BJ (cell line): ENCODE measurements at regions of chr14 and their contacts with region 1.

Region 1: DNA sequence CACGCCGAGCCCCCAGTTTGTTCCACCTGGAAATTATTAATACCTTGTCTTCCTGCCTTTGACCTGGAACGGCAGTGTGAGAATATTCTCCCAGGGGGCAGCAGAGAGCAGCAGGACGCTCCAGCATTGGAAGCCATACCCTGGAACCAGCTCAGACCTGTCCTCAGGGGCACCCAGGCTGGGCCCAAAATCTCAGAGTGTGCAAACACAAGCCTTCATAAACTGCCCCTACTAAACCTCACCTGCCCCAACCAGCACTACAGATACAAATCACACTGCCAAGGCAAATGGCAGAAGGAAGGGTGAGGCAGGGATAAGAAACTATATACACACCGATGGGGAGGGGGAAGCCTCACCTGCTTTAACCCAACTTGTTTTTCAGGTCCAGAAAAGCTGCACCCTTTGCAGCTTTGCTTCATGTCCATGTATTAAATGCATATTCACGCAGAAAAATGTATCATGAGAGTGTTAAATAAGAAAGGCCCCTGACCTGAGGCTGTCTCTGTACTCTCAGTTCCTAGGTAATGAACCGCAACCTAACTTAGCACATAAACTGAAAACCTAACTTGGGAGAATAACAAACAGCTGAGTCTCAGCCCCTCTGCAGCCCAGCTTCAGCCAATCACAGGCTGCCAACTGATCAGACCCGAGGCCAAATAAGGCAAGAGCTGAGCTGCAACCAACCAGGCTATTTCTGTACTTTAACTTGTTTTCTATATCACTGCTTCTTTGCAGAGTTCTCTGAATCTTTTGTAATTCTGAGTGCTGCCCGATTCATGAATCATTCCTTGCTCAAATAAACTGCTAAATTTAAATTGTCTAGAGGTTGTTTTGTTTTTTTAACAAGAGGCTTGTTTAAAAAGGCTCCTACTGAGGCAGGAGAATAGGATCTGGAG is 130.1 kb downstream of the SPTSSA start:
- DNase-seq: no peak
- H3K4me3 ChIP-seq: no peak overlapping the region
- H3K27me3 ChIP-seq: peaks cover under 1% of the 10 kb centered on the region; the same call in 1 of the 2 replicates
- CTCF ChIP-seq: peak; percentile 82

Region 2: GRCh38 chr14:33938131-33938949 is 393.6 kb before region 1 on chr14:
- CTCF ChIA-PET with region 1: no interaction called
- POLR2A ChIA-PET with region 1: no interaction called
- DNase-seq: no peak
- H3K4me3 ChIP-seq: no peak overlapping the region
- H3K27me3 ChIP-seq: no peaks in the 10 kb centered on the region; the same call in 1 of the 2 replicates
- CTCF ChIP-seq: no peak

Region 3: GRCh38 chr14:34498684-34499412 is 166.9 kb after region 1 on chr14:
- CTCF ChIA-PET with region 1: interaction called, 13 read pairs
- POLR2A ChIA-PET with region 1: no interaction called
- DNase-seq: no peak
- H3K4me3 ChIP-seq: no peak overlapping the region
- H3K27me3 ChIP-seq: no peaks in the 10 kb centered on the region
- CTCF ChIP-seq: 0 out of 2 replicates have a peak, but pooled peaks have one; percentile 4